Calu3 (cell line): ENCODE measurements at regions of chr6 and their contacts with region 1.

Region 1: GRCh38 chr6:105087571-105088211 is 92.1 kb downstream of the POPDC3 start:
- DNase-seq: peak; percentile 42
- H3K4me3 Mint-ChIP-seq: no peak overlapping the region
- H3K27ac Mint-ChIP-seq: no peak overlapping the region
- H3K4me1 Mint-ChIP-seq: no peaks in the 10 kb centered on the region
- H3K27me3 Mint-ChIP-seq: no peaks in the 10 kb centered on the region
- CTCF ChIP-seq: peak; percentile 65

Region 2: GRCh38 chr6:105272786-105273185 is 185.1 kb after region 1 on chr6:
- CTCF ChIA-PET with region 1: interaction called, 5 read pairs
- intact Hi-C with region 1: loop called (anchors 2 kb)
- DNase-seq: peak; percentile 50
- H3K4me3 Mint-ChIP-seq: no peak overlapping the region
- H3K27ac Mint-ChIP-seq: no peak overlapping the region
- H3K4me1 Mint-ChIP-seq: peaks cover 17% of the 10 kb centered on the region
- H3K27me3 Mint-ChIP-seq: no peaks in the 10 kb centered on the region
- CTCF ChIP-seq: no peak

Region 3: GRCh38 chr6:105317607-105318533 is 230.2 kb after region 1 on chr6:
- CTCF ChIA-PET with region 1: no interaction called
- intact Hi-C with region 1: loop called (anchors 1 kb)
- DNase-seq: peak; percentile 46
- H3K4me3 Mint-ChIP-seq: no peak overlapping the region
- H3K27ac Mint-ChIP-seq: no peak overlapping the region
- H3K4me1 Mint-ChIP-seq: no peaks in the 10 kb centered on the region
- H3K27me3 Mint-ChIP-seq: no peaks in the 10 kb centered on the region
- CTCF ChIP-seq: peak; percentile 45

Region 4: DNA sequence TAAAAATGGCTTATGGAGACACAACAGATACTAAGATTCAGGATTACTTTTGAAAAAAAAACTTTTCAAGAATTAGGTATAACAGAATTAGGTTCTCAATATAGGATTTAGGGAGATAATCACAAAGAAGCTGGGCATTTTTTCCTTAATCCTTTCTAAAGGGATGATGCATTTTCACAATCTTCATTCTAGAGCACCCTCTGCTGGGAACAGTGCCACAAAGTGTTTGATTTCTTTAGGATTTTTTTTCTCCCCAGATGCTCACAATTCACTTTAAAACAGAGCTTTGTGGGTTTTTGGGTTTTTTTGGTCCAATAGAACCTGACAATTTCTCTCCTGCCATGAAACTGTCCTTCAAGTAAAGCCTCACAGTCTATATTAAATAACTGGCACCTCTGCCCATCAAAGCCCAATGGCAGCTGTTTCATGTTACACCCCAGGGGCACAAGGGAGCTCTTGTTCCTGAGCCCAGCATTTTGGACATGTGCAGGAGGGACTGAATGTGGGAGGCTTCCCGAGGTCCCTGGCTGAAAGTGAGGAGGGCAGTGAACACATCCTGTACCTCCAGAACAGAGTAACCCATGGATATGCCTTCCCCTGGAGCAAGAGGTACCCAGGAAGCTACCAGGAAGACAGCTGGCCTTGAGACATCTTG is 275.5 kb after region 1 on chr6:
- CTCF ChIA-PET with region 1: interaction called, 6 read pairs
- intact Hi-C with region 1: loop called (anchors 1 kb)
- DNase-seq: no peak
- H3K4me3 Mint-ChIP-seq: no peak overlapping the region
- H3K27ac Mint-ChIP-seq: peak overlapping the region; percentile 73
- H3K4me1 Mint-ChIP-seq: peaks cover 20% of the 10 kb centered on the region
- H3K27me3 Mint-ChIP-seq: no peaks in the 10 kb centered on the region
- CTCF ChIP-seq: peak; percentile 33

Region 5: DNA sequence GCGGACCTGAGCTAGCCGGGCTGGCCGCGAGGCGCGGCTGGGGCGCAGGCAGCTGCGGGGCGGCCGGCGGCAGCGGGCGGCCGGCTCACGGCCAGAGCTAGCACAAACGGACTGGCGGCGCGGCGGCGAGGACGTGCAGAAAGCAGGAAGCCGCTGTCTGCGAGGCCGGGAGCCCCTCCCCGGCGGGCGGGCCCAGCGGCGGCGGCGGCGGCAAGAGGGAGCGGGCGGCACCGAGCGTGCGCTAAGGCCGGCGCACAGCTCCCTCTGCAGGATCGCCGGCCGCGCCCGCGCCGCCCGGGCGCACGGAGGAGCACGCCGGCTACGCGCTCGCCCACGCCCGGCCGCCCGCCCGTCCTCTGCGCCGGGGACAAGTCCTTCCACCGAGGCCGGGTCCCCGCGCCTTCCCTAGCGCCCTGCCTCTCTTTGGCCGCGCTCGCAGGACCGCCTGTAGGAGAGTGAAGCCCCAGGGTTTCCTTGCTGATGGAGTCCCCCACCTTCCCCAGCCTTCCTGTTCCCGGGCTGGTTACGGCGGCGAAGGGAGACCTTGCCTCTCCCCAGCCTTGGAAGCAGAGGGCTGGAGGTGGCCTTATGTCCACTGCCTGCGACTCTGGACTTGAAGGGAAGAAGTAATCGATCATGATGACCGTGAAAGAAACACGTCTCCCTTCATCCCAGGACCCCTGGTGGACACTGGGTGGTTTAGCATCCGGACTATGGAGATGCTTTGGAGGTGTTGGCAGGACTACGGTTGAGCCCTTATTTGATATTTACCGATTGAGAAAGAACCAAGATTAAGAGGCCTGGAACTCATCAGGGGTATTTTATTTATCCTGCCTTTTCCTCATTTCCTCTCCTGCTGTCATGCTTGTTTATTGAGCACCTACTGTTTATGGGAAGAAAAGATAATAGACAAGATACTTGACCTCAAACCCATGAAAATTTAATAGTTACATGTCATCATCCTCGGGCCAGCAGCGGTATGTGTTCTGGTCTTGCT is 315.5 kb after region 1 on chr6 and contains the start of gene PREP:
- CTCF ChIA-PET with region 1: interaction called, 3 read pairs
- intact Hi-C with region 1: loop called (anchors 1 kb)
- DNase-seq: peak; percentile 90
- H3K4me3 Mint-ChIP-seq: peak within 1 kb of the TSS; percentile 99
- H3K27ac Mint-ChIP-seq: peak within 1 kb of the TSS; percentile 78
- H3K4me1 Mint-ChIP-seq: peaks cover 38% of the 10 kb centered on the region
- H3K27me3 Mint-ChIP-seq: no peaks in the 10 kb centered on the region
- CTCF ChIP-seq: peak; percentile 78
- total RNA-seq, gene PREP: 62.4 and 70.4 TPM in 2 replicates

Region 6: GRCh38 chr6:105424175-105424783 is 336.6 kb after region 1 on chr6:
- CTCF ChIA-PET with region 1: interaction called, 3 read pairs
- intact Hi-C with region 1: loop called (anchors 1 kb)
- DNase-seq: peak; percentile 58
- H3K4me3 Mint-ChIP-seq: no peak overlapping the region
- H3K27ac Mint-ChIP-seq: no peak overlapping the region
- H3K4me1 Mint-ChIP-seq: peaks cover 28% of the 10 kb centered on the region
- H3K27me3 Mint-ChIP-seq: no peaks in the 10 kb centered on the region
- CTCF ChIP-seq: peak; percentile 64

Region 7: GRCh38 chr6:105591053-105591452 is 503.4 kb after region 1 on chr6:
- CTCF ChIA-PET with region 1: no interaction called
- intact Hi-C with region 1: loop called (anchors 5 kb)
- DNase-seq: peak; percentile 10
- H3K4me3 Mint-ChIP-seq: no peak overlapping the region
- H3K27ac Mint-ChIP-seq: no peak overlapping the region
- H3K4me1 Mint-ChIP-seq: peaks cover 52% of the 10 kb centered on the region
- H3K27me3 Mint-ChIP-seq: no peaks in the 10 kb centered on the region
- CTCF ChIP-seq: no peak